Activated T-helper 1 cell treated with anti-CD3 and anti-CD28 coated beads, Interleukin-12 subunit alpha, Interleukin-12 subunit beta, Interleukin-2, Interleukin-4 antibody, amounts not matched to agents 30 ng/mL and 10 ng/mL and 1 ng/mL, durations not matched to agents 14 hours and 24 hours and 36 hours (primary cell): ENCODE measurements at regions of chr4 and their contacts with region 1.

Region 1: DNA sequence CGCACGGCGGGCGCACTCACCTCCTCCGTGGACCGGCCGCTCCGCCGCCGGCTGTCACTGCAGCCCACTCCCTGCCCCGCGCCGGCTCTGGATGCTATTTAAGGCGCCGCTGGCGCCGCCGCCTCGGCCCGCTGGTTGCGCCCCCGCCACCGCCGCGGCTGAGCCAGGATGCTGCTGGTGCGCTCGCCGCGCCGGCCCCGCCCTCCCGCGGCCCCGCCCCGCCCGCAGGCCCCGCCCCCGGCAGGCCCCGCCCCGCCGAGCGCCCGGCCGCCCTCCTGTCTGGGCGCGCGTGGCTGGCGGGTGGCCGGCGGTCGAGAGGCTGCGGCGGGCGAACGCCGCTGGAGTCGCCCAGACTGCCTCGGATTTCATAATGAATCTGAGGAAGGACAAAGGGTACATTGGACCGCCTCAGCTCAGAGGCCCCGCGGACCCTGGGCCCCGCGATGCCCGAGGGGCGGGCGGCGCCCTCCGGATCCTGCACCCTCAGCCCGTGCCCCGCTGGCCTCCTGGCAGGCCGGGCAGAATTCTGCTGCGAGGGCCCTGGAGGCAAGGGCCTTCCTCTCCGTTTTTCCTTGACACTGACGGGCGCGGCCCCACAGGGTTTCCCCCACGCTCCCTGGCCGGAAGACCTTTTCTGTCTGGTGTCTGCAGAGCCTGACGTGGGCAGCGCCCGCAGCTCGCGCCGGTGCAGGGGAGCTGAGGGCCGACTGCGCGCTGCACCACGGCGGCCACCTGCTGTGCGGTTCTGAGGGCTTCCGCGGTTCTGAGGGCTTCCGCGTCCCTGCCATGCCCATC is at the start of gene ACSL1:
- DNase-seq: peak; percentile 75
- H3K4me3 Mint-ChIP-seq: peak within 1 kb of the TSS; percentile 93
- H3K27ac Mint-ChIP-seq: peak within 1 kb of the TSS; percentile 96
- H3K4me1 Mint-ChIP-seq: peaks cover 56% of the 10 kb centered on the region
- H3K27me3 Mint-ChIP-seq: peaks cover 8% of the 10 kb centered on the region
- total RNA-seq, gene ACSL1: 56.7 and 61.8 TPM in 2 replicates

Region 2: DNA sequence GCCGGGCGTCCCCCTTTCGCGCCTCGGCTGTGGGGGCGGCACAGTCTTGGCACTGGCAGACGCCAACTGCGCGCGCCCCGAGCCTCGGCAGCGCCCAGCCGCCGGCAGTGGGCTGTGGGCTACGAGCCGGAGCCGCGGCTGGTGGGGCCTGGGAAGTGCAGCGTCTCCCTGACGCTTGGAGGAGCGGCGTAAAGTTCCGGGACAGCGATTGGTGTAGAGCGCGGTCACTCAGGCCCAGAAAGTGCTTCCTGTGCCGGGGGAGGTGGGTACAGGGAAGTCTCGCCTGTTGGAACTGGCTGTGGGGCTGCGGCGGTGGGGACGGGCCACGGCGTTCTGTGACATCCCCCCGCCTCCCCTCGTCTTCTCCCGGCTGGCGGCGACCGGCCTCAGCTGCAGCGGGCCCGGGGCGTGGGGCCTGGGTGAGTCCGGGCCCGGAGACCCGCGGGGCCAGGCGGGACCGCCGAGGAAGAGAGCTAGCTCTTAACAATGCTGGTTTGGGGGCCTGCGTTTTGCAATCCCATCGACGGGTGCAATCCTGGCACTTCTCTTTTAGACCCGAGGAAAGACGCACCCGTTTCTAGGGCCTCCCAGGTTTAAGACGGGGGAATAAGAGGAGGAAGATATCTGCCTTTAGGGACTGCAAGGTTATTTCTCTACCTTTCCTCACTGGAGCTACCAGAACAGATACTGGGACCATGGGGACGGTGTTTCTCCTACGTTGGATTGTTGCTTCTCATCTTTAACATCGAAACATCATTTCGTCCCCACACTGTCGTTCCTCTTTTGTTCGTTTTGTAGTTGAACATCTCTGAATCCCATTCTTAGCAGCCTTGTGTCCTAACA is 1166.8 kb before region 1 on chr4 and contains the starts of genes RWDD4 and TRAPPC11:
- intact Hi-C with region 1: loop called (anchors 2 kb)
- DNase-seq: peak; percentile 95
- H3K4me3 Mint-ChIP-seq: peak within 1 kb of the TSS; percentile 100
- H3K27ac Mint-ChIP-seq: peak within 1 kb of the TSS; percentile 96
- H3K4me1 Mint-ChIP-seq: peaks cover 32% of the 10 kb centered on the region
- H3K27me3 Mint-ChIP-seq: no peaks in the 10 kb centered on the region
- total RNA-seq, gene RWDD4: 23.9 and 24.2 TPM in 2 replicates
- total RNA-seq, gene TRAPPC11: 23.0 and 33.7 TPM in 2 replicates

Region 3: DNA sequence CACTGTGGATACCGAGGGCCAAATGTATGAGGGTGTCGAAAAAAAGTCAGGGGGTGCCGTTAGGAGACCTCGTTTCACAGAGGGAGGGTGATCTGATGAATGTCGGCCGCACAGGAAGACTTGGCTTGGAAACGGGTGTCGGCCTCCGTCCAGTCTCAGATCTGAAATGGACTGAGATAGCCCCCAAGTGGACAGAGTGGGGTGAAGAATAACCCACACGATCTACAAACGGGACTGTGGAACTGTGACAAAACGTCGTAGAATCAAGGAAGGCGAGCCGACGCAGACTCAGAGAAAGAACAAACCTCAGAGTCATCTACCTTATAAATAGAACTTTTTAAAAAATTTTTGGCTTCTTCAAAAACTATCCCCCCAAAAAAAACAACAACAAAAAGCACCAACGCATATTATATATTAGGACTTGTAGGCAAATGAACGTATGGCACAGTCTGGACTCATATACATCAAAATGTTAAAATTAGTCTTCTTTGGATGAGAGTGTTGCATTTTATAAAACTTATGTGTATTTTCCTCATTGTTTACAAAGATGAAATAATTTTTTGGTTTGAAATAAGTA is 288.0 kb before region 1 on chr4:
- intact Hi-C with region 1: loop called (anchors 10 kb)
- DNase-seq: peak; percentile 55
- H3K4me3 Mint-ChIP-seq: peak overlapping the region; percentile 91
- H3K27ac Mint-ChIP-seq: peak overlapping the region; percentile 94
- H3K4me1 Mint-ChIP-seq: peaks cover 64% of the 10 kb centered on the region
- H3K27me3 Mint-ChIP-seq: no peaks in the 10 kb centered on the region

Region 4: GRCh38 chr4:184762100-184762499 is 64.0 kb before region 1 on chr4:
- intact Hi-C with region 1: loop called (anchors 1 kb)
- DNase-seq: peak; percentile 59
- H3K4me3 Mint-ChIP-seq: peak overlapping the region; percentile 16
- H3K27ac Mint-ChIP-seq: peak overlapping the region; percentile 85
- H3K4me1 Mint-ChIP-seq: peaks cover 33% of the 10 kb centered on the region
- H3K27me3 Mint-ChIP-seq: no peaks in the 10 kb centered on the region

Region 5: DNA sequence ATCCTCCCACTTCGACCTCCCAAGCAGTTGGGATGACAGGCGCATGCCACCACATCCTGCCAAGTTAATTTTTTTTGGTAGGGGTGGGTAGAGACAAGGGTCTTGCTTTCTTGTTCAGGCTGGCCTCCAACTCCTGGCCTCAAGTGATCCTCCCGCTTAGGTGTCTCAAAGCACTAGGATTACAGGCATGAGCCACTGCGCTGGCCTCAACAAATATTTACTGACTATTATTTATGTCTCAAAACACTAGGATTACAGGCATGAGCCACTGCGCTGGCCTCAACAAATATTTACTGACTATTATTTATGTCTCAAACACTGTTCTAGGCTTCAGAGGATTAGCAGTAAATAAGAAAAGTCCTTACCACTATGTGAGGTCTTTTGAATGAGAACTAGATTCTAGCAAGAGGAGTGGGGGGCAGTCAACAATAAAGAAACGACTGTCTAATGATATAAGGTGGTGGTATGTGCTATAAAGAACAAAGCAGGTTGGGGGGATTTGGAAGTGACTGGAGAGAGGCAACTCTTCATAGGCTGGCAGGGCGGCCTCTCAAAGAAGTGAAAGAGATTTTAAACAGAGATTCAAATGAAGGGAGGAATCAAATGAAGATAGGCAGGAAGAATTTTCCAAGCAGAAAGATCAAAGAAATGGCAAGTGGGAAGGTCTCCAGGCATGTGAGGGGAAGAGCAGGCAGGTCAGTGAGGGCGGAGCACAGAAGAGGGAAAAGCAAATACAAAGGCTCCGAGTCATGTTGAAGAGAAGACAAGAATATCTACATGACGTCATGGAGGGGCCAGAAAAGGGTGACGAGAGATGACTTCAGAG is 12.4 kb after region 1 on chr4:
- intact Hi-C with region 1: no loop called
- DNase-seq: no peak
- H3K4me3 Mint-ChIP-seq: no peak overlapping the region
- H3K27ac Mint-ChIP-seq: no peak overlapping the region
- H3K4me1 Mint-ChIP-seq: peaks cover 10% of the 10 kb centered on the region
- H3K27me3 Mint-ChIP-seq: peaks cover 5% of the 10 kb centered on the region

Region 6: DNA sequence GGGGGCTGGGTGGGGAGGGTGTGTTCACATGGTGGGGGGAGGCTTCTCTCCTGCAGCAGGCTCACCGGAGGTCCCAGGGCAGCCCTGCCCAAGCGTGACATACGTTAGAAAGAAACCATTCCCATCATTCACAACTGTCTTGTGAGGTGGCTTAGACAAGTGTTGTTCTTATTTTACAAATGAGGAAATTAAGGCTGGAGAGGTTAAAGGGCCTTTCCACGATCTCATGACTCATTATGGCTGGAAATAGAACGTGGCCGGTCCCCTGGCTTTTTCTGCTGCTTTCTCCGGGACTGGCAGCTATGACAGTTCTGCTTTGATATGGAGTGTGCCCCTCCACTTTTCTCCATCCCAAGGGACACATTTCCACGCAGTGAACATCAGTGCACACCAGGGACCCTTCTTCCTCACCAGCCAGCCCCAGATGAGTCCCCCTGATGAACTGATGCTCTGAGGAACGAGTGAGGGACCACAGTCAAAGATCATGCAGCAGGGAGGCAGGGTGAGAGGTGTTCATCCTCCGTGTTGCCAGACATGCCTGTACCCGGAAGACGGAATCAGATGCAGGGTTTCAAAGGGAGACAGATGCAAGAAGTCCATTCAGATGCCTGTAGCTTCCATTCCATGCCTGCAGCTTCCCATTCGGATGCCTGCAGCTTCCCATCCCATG is 63.7 kb after region 1 on chr4:
- intact Hi-C with region 1: no loop called
- DNase-seq: no peak
- H3K4me3 Mint-ChIP-seq: no peak overlapping the region
- H3K27ac Mint-ChIP-seq: no peak overlapping the region
- H3K4me1 Mint-ChIP-seq: peaks cover 10% of the 10 kb centered on the region
- H3K27me3 Mint-ChIP-seq: peaks cover 10% of the 10 kb centered on the region

Region 7: DNA sequence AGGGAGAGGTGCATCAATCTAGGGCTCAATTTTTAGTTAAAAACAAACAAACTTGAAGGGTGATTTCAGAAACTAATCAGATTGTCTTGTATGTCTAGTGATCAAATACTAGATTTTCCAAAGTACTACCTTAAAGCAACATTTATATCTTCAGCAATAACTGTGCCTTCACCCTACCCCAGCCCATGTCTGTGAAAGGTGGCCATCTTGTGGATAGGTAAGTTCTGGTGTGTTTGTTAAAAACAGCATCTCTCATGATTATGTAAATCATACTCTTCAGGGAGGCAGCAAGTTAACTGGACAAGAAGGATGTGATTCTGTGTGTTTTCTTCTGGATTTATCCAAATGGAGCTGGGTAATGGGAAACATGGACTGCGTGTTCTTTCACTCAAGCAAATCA is 81.1 kb after region 1 on chr4:
- intact Hi-C with region 1: loop called (anchors 2 kb)
- DNase-seq: no peak
- H3K4me3 Mint-ChIP-seq: no peak overlapping the region
- H3K27ac Mint-ChIP-seq: no peak overlapping the region
- H3K4me1 Mint-ChIP-seq: peaks cover 15% of the 10 kb centered on the region
- H3K27me3 Mint-ChIP-seq: peaks cover 5% of the 10 kb centered on the region

Region 8: GRCh38 chr4:185395956-185396723 is 570.0 kb after region 1 on chr4:
- intact Hi-C with region 1: loop called (anchors 10 kb)
- DNase-seq: peak; percentile 98
- H3K4me3 Mint-ChIP-seq: peak overlapping the region; percentile 94
- H3K27ac Mint-ChIP-seq: peak overlapping the region; percentile 97
- H3K4me1 Mint-ChIP-seq: peaks cover 69% of the 10 kb centered on the region
- H3K27me3 Mint-ChIP-seq: peaks cover 2% of the 10 kb centered on the region